ENCODE measurements at regions of chr4 and their contacts with region 1.

Region 1: GRCh38 chr4:2755837-2756694 is at the start of gene TNIP2:
- DNase-seq: peak; percentile 63 to 91 (median 76)
- ATAC-seq: peak; percentile 78
- H3K4me3 ChIP-seq: peak within 1 kb of the TSS; percentile 68
- H3K4me3 Mint-ChIP-seq: peak within 1 kb of the TSS; percentile 90
- H3K27ac ChIP-seq: peak within 1 kb of the TSS; percentile 29 to 56
- H3K27ac Mint-ChIP-seq: peak within 1 kb of the TSS; percentile 73
- H3K4me1 ChIP-seq: peaks cover 33% of the 10 kb centered on the region
- H3K4me1 Mint-ChIP-seq: peaks cover 31% of the 10 kb centered on the region
- H3K27me3 ChIP-seq: no peaks in the 10 kb centered on the region
- H3K27me3 Mint-ChIP-seq: no peaks in the 10 kb centered on the region
- CTCF ChIP-seq: no peak
- total RNA-seq, gene TNIP2: 43.8 to 49.1 TPM

Region 2: GRCh38 chr4:2220016-2220630 is 535.9 kb before region 1 on chr4:
- CTCF ChIA-PET with region 1: no interaction called
- POLR2A ChIA-PET with region 1: no interaction called
- intact Hi-C with region 1: no loop called
- DNase-seq: peak; percentile 71 to 88 (median 78)
- ATAC-seq: peak; percentile 98
- H3K4me3 ChIP-seq: no peak overlapping the region
- H3K4me3 Mint-ChIP-seq: no peak overlapping the region
- H3K27ac ChIP-seq: no peak overlapping the region
- H3K27ac Mint-ChIP-seq: no peak overlapping the region
- H3K4me1 ChIP-seq: peaks cover 6% of the 10 kb centered on the region
- H3K4me1 Mint-ChIP-seq: peaks cover 7% of the 10 kb centered on the region
- H3K27me3 ChIP-seq: no peaks in the 10 kb centered on the region
- H3K27me3 Mint-ChIP-seq: no peaks in the 10 kb centered on the region
- CTCF ChIP-seq: peak; percentile 88

Region 3: GRCh38 chr4:2792711-2793585 is 36.9 kb after region 1 on chr4 and contains the start of gene SH3BP2:
- CTCF ChIA-PET with region 1: no interaction called
- POLR2A ChIA-PET with region 1: interaction called, 6 read pairs
- intact Hi-C with region 1: loop called in 1 of 2 experiments (anchors 5 kb)
- DNase-seq: peak in 12 of 14 experiments; percentile 36 to 81 (median 58)
- ATAC-seq: peak; percentile 43
- H3K4me3 ChIP-seq: peak within 1 kb of the TSS; percentile 65
- H3K4me3 Mint-ChIP-seq: peak within 1 kb of the TSS; percentile 84
- H3K27ac ChIP-seq: peak within 1 kb of the TSS in 1 of 2 donors; percentile 21
- H3K27ac Mint-ChIP-seq: peak within 1 kb of the TSS; percentile 75
- H3K4me1 ChIP-seq: peaks cover 83% of the 10 kb centered on the region
- H3K4me1 Mint-ChIP-seq: peaks cover 44% of the 10 kb centered on the region
- H3K27me3 ChIP-seq: no peaks in the 10 kb centered on the region
- H3K27me3 Mint-ChIP-seq: no peaks in the 10 kb centered on the region
- CTCF ChIP-seq: no peak
- total RNA-seq, gene SH3BP2: 30.1 to 30.5 TPM

Region 4: DNA sequence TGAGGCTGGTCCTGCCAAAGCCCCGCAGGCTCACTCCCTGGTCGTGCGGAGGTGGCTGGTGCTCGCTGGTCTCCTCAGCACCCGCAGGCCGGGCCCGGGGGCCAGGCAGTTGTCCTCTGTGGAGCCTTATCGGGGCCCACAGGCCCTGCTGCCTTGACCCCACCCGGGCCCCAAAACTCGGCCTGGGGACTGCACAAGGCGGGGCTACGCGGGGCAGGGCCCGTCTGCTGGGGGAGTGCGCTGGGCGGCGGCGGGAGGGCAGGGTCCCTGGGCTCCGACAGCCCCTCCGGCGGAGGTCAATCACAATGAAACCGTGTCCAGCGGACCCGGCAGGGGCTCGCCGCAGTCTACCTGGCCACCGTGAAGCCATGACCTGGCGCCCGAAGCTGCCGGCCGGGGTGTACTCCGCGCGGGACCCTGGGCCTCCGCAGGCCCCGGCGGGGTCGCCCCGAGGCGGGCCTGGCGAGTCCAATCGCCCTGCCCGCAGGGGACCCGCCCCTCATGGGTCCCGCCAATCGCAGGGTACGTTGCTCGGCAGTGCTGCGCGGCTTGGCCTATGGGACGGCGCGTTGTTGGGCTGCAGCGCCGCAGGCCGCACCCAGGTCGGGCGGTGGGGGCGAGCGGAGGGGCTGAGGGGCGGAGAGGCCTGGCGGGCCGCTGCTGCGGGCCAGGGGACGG is 87.3 kb after region 1 on chr4 and contains the start of gene ADD1:
- CTCF ChIA-PET with region 1: no interaction called
- POLR2A ChIA-PET with region 1: interaction called, 4 read pairs
- intact Hi-C with region 1: loop called (anchors 2 to 5 kb)
- DNase-seq: peak; percentile 82 to 100 (median 92)
- ATAC-seq: peak; percentile 93
- H3K4me3 ChIP-seq: peak within 1 kb of the TSS; percentile 97
- H3K4me3 Mint-ChIP-seq: peak within 1 kb of the TSS; percentile 98
- H3K27ac ChIP-seq: peak within 1 kb of the TSS; percentile 66 to 85
- H3K27ac Mint-ChIP-seq: peak within 1 kb of the TSS; percentile 92
- H3K4me1 ChIP-seq: peaks cover 49% of the 10 kb centered on the region
- H3K4me1 Mint-ChIP-seq: peaks cover 63% of the 10 kb centered on the region
- H3K27me3 ChIP-seq: no peaks in the 10 kb centered on the region
- H3K27me3 Mint-ChIP-seq: no peaks in the 10 kb centered on the region
- CTCF ChIP-seq: no peak
- total RNA-seq, gene ADD1: 153 TPM

Region 5: GRCh38 chr4:2934813-2935761 is 179.0 kb after region 1 on chr4:
- CTCF ChIA-PET with region 1: no interaction called
- POLR2A ChIA-PET with region 1: interaction called, 9 read pairs
- intact Hi-C with region 1: loop called in 1 of 2 experiments (anchors 2 kb)
- DNase-seq: peak; percentile 93 to 99 (median 96)
- ATAC-seq: peak; percentile 58
- H3K4me3 ChIP-seq: peak overlapping the region; percentile 92
- H3K4me3 Mint-ChIP-seq: peak overlapping the region; percentile 93
- H3K27ac ChIP-seq: peak overlapping the region; percentile 82 to 87
- H3K27ac Mint-ChIP-seq: peak overlapping the region; percentile 94
- H3K4me1 ChIP-seq: peaks cover 71% of the 10 kb centered on the region
- H3K4me1 Mint-ChIP-seq: peaks cover 45% of the 10 kb centered on the region
- H3K27me3 ChIP-seq: no peaks in the 10 kb centered on the region
- H3K27me3 Mint-ChIP-seq: no peaks in the 10 kb centered on the region
- CTCF ChIP-seq: no peak

Region 6: DNA sequence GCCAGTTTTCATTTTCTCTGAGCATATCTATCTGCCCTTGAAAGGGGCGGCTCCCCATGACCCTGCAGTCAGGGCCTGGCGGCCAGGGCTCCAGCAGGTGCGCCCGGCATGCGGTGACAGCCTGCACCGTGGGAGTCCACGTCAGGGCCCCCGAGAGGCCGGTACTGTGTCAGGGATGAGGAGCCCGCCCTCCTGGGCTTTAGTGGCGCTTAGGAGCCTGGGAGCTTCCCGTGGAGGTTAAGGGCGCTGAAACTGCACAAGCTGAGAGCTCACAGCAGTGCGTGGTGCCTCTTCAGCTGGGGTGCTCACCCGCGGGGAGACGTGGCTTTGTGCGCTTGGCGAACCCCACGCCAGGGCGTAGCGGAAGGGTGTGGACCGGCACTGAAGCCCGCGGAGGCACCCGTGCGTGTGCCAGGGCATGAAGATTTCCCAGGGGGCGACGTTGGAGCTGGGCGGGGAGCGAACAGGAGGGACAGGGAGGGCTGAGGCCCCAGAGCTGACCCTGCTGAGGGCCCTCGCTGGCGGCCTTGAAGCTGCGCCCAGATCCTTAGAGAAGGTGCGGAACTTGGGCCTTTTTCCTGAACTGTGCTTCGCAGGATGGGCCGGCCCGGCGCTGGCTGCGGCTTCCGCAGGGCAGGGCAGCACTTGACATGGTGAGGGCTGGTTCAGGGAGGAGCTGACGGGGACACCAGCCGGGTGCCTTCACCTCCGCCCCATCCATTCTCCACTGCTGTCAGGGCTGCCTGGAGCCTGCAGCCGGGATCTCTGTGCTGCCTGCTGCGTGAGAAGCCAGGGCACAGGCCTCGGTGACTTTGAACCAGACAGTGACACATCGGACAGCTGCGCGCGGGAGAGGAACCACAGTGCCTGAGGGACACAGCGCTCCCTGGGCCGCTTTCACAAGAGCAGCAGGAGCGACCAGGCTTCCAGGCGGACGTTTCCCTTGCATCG is 285.4 kb after region 1 on chr4:
- CTCF ChIA-PET with region 1: no interaction called
- POLR2A ChIA-PET with region 1: no interaction called
- intact Hi-C with region 1: loop called (anchors 1 to 5 kb)
- DNase-seq: peak in 11 of 14 experiments; percentile 13 to 79 (median 27)
- ATAC-seq: peak; percentile 37
- H3K4me3 ChIP-seq: peak overlapping the region; percentile 58
- H3K4me3 Mint-ChIP-seq: peak overlapping the region; percentile 90
- H3K27ac ChIP-seq: peak overlapping the region in 1 of 2 donors; percentile 51
- H3K27ac Mint-ChIP-seq: peak overlapping the region; percentile 82
- H3K4me1 ChIP-seq: peaks cover 71% of the 10 kb centered on the region
- H3K4me1 Mint-ChIP-seq: peaks cover 54% of the 10 kb centered on the region
- H3K27me3 ChIP-seq: no peaks in the 10 kb centered on the region
- H3K27me3 Mint-ChIP-seq: peaks cover 12% of the 10 kb centered on the region
- CTCF ChIP-seq: no peak

Region 7: GRCh38 chr4:3047464-3048286 is 291.6 kb after region 1 on chr4:
- CTCF ChIA-PET with region 1: no interaction called
- POLR2A ChIA-PET with region 1: no interaction called
- intact Hi-C with region 1: loop called in 1 of 2 experiments (anchors 5 kb)
- DNase-seq: peak; percentile 31 to 90 (median 55)
- ATAC-seq: peak; percentile 59
- H3K4me3 ChIP-seq: peak overlapping the region; percentile 57
- H3K4me3 Mint-ChIP-seq: peak overlapping the region; percentile 86
- H3K27ac ChIP-seq: peak overlapping the region in 1 of 2 donors; percentile 45
- H3K27ac Mint-ChIP-seq: peak overlapping the region; percentile 68
- H3K4me1 ChIP-seq: peaks cover 41% of the 10 kb centered on the region
- H3K4me1 Mint-ChIP-seq: peaks cover 35% of the 10 kb centered on the region
- H3K27me3 ChIP-seq: no peaks in the 10 kb centered on the region
- H3K27me3 Mint-ChIP-seq: no peaks in the 10 kb centered on the region
- CTCF ChIP-seq: peak; percentile 76